Calu3 (cell line): ENCODE measurements at regions of chr12 and their contacts with region 1.

Region 1: GRCh38 chr12:106223485-106224354 is 24.1 kb downstream of the CKAP4 start:
- DNase-seq: peak; percentile 82
- H3K4me3 Mint-ChIP-seq: no peak overlapping the region
- H3K27ac Mint-ChIP-seq: no peak overlapping the region
- H3K4me1 Mint-ChIP-seq: peaks cover 12% of the 10 kb centered on the region
- H3K27me3 Mint-ChIP-seq: peaks cover 20% of the 10 kb centered on the region
- CTCF ChIP-seq: peak; percentile 91

Region 2: DNA sequence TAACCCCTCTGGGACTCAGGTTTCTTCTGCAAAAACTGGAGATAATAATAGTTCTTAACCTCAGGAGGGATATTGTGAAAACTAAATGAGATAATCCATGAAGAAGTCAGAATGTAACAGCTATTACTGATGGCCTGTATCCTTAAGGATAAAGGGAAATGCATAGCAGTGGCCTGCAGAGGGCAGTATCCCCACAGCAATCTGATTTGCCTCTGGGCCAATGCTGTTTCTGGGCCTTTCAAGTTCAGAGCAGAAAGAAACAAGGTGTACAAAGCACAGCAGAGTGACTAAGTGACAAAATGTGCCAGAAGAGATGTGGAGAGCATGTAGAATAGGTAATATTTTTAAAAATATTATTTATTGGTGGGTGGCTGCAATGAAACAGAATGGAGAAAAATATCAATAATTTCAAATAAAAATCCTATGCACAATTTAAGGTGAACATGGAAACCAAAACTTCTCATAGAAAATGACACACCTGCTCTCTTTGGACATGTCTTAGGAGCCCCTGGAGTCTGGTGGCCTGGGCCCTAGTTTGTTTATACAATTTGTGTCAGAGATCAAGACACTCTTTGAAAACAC is 803.0 kb before region 1 on chr12:
- CTCF ChIA-PET with region 1: interaction called, 16 read pairs
- intact Hi-C with region 1: loop called (anchors 1 kb)
- DNase-seq: peak; percentile 85
- H3K4me3 Mint-ChIP-seq: no peak overlapping the region
- H3K27ac Mint-ChIP-seq: no peak overlapping the region
- H3K4me1 Mint-ChIP-seq: peaks cover 23% of the 10 kb centered on the region
- H3K27me3 Mint-ChIP-seq: no peaks in the 10 kb centered on the region
- CTCF ChIP-seq: peak; percentile 85

Region 3: DNA sequence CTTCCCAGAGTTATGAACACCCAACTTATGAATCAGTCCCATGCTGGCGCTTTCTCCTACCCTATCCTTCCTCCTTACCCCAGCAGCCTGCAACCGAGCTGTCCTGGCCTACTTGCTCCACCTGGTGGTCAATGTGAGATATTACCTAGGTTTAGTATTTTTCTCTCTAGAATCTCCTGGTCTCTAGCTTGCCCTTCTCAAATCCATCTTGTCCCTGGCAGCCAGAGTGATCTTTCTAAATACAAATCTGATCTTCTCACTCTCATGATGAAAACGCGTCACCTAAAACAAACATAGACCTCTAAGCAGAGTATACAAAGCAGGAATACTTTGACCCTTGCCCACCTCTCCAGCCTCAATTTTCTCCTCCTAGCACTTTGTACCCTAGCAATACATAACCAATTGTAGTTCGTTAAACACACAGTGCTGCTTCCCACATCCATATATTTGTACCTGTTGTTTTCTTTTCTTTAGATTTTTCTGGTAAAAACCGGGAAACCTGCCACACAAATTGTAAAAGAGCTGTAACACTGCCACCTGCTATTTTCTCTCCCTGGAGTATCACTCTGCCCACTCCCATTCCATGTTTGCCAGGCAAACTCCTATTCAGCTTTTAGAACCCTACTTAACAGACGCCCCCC is 58.9 kb after region 1 on chr12:
- CTCF ChIA-PET with region 1: interaction called, 22 read pairs
- intact Hi-C with region 1: loop called (anchors 1 kb)
- DNase-seq: peak; percentile 63
- H3K4me3 Mint-ChIP-seq: no peak overlapping the region
- H3K27ac Mint-ChIP-seq: peak overlapping the region; percentile 69
- H3K4me1 Mint-ChIP-seq: peaks cover 66% of the 10 kb centered on the region
- H3K27me3 Mint-ChIP-seq: no peaks in the 10 kb centered on the region
- CTCF ChIP-seq: peak; percentile 70

Region 4: DNA sequence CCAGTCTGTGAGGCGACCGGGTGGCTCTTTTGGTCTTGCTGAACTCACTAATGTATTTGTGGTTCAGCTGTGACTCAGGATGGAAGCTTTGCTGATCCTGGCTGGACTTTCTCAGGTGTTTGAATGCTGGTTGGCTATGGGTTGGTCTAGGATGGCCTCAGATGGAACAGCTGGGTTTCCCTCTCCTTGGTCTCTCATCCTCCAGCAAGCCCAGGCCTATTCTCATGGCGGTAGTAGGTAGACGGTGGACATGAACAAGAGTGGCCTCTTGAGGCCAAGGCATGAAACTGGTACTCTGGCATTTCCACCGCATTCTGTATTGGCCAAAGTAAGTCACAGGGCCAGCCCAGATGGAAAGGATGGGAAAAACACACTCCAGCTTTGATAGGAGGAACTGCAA is 122.0 kb after region 1 on chr12:
- CTCF ChIA-PET with region 1: interaction called, 30 read pairs
- intact Hi-C with region 1: loop called (anchors 1 kb)
- DNase-seq: peak; percentile 65
- H3K4me3 Mint-ChIP-seq: no peak overlapping the region
- H3K27ac Mint-ChIP-seq: no peak overlapping the region
- H3K4me1 Mint-ChIP-seq: peaks cover 19% of the 10 kb centered on the region
- H3K27me3 Mint-ChIP-seq: peaks cover 15% of the 10 kb centered on the region
- CTCF ChIP-seq: peak; percentile 52

Region 5: DNA sequence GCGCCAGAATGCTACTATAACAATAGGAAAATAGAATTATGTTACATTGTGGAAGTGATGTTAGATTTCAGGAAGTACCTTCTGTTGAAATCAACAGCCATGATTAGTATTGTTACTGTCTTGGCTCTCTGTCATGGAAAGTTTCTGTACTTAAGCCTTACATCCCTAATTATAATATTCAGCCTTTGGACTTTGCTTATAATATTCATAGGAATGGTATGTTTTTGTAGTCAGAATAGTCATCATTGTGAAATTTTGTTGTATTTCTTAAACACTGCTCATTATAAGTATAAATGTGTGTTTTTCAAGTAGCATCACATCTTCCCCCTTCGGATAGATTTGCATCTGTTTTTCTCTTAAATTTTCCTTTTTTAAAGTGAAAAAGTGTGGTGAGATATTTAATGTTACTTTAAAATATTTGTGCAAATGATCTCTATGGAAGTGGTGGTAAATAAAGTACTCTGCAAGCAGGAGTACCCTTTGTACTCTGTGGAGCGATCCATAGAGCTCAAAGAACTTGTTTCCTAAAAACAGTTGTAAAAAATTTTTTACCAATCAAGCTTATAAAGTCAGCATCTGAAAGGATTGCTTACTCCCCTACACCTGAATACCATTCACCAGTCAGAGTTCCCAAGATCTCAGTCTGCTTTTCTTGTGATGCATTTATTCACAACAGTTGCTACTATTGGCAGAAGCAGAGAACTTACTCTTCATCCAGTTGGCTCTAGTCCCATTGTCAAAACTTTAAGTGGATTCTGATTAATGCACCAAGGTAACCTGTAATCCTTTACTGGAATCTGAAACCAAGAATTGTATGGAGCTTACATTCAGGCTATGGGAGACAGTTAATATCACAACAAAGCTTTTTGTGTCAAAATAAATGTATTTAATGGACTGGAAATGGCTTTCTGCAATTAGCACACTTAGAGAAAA is 638.5 kb after region 1 on chr12:
- CTCF ChIA-PET with region 1: no interaction called
- intact Hi-C with region 1: loop called (anchors 10 kb)
- DNase-seq: no peak
- H3K4me3 Mint-ChIP-seq: no peak overlapping the region
- H3K27ac Mint-ChIP-seq: no peak overlapping the region
- H3K4me1 Mint-ChIP-seq: no peaks in the 10 kb centered on the region
- H3K27me3 Mint-ChIP-seq: no peaks in the 10 kb centered on the region
- CTCF ChIP-seq: no peak